ENCODE measurements at regions of chr6 and their contacts with region 1.

Region 1: GRCh38 chr6:8102122-8102958 is at the start of gene EEF1E1:
- DNase-seq: peak; percentile 92
- ATAC-seq: peak; percentile 92
- H3K4me3 ChIP-seq: peak within 1 kb of the TSS; percentile 95 to 96
- H3K27ac ChIP-seq: peak within 1 kb of the TSS; percentile 72
- H3K4me1 ChIP-seq: peaks cover 12 to 17% of the 10 kb centered on the region in 2 experiments; a peak in 3 of 4 replicates
- H3K27me3 ChIP-seq: no peaks in the 10 kb centered on the region
- CTCF ChIP-seq: no peak
- POLR2A ChIP-seq: peak; percentile 71
- RAD21 ChIP-seq: 0 out of 2 replicates have a peak, but pooled peaks have one; percentile 10
- total RNA-seq, gene EEF1E1: 69.7 TPM

Region 2: DNA sequence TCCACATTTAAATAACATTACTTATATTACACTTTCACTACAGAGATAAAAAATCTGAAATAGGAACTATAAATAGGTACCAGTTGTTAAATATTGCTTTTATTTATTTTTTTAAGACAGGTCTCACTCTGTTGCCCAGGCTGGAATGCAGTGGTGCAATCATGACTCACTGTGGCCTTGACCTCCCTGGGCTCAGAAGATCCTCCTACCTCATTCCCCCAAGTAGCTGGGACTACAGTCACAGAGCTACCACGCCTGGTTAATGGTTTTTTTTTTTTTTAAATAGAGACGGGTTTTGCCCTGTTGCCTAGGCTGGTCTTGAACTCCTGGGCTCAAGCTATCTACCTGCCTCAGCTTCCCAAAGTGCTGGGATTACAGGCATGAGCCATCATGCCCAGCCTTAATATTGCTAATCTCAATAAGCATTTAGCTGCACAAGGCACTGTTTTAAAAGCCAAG is 17.3 kb before region 1 on chr6:
- CTCF ChIA-PET with region 1: no interaction called
- POLR2A ChIA-PET with region 1: interaction called, 11 read pairs
- RAD21 ChIA-PET with region 1: no interaction called
- intact Hi-C with region 1: no loop called
- DNase-seq: peak; percentile 88
- ATAC-seq: peak; percentile 94
- H3K4me3 ChIP-seq: peak overlapping the region in 1 of 2 experiments; percentile 13; a peak in 1 of 4 replicates
- H3K27ac ChIP-seq: peak overlapping the region; percentile 79
- H3K4me1 ChIP-seq: peaks cover 55 to 59% of the 10 kb centered on the region in 2 experiments
- H3K27me3 ChIP-seq: no peaks in the 10 kb centered on the region
- CTCF ChIP-seq: no peak
- POLR2A ChIP-seq: no peak
- RAD21 ChIP-seq: no peak

Measured in HCT116 (cell line).